ENCODE measurements at regions of chr5 and their contacts with region 1.

Region 1: DNA sequence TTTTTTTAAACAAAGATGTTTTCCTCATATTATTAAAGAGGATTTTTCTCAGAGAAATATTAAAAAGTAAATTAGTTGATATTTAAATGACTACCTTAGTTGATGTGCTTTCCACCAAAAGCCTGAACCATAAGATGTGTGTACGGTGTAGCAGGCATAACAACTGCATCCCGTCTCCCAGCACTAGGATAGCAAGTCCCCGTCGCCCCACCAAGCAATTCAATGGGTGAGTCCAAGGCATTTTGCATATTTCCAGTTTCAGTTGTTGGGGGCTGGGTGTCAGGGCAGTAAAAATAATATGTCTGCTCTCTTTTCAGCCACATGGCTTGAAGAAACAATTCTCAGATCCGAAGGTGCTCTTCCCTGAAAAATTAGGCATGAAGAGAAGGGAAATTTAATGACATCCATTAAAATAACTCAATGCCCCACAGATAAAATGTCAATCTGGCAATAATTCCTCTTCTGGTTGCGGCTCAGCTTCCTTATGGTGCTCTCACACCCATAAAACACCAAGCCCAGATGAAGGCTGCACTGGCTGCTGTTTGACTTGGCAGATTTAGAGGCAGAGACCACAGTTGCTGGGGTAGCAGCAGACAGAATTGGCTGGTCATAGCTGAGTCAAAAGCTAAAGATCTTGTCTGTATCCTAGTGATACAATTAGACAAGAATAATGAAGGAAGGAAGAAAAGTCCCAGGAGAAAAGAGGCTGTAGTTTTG is 124.4 kb upstream of the ADCY2 start:
- DNase-seq: no peak
- ATAC-seq: no peak
- H3K4me3 ChIP-seq: no peak overlapping the region
- H3K27ac ChIP-seq: no peak overlapping the region
- H3K4me1 ChIP-seq: no peaks in the 10 kb centered on the region
- H3K27me3 ChIP-seq: no peaks in the 10 kb centered on the region; a peak in 1 of 5 replicates
- CTCF ChIP-seq: no peak
- EP300 ChIP-seq: no peak
- POLR2A ChIP-seq: no peak
- RAD21 ChIP-seq: no peak

Region 2: GRCh38 chr5:7225826-7226225 is 45.7 kb before region 1 on chr5:
- CTCF ChIA-PET with region 1: no interaction called
- POLR2A ChIA-PET with region 1: no interaction called
- in situ Hi-C with region 1: no loop called
- intact Hi-C with region 1: loop called (anchors 1 kb)
- DNase-seq: no peak
- ATAC-seq: no peak
- H3K4me3 ChIP-seq: no peak overlapping the region
- H3K27ac ChIP-seq: no peak overlapping the region
- H3K4me1 ChIP-seq: no peaks in the 10 kb centered on the region
- H3K27me3 ChIP-seq: no peaks in the 10 kb centered on the region
- CTCF ChIP-seq: no peak
- EP300 ChIP-seq: no peak
- POLR2A ChIP-seq: no peak
- RAD21 ChIP-seq: no peak

Measured in HepG2 (cell line).